Natural killer cell (primary cell): ENCODE measurements at regions of chr5 and their contacts with region 1.

Region 1: GRCh38 chr5:34695275-34696027 is 39.3 kb downstream of the RAI14 start:
- DNase-seq: peak in 1 of 2 donors; percentile 8
- ATAC-seq: peak; percentile 74 to 95 (median 84)
- H3K4me3 ChIP-seq: no peak overlapping the region
- H3K4me3 Mint-ChIP-seq: no peak overlapping the region
- H3K27ac ChIP-seq: peak overlapping the region; percentile 14
- H3K27ac Mint-ChIP-seq: peak overlapping the region; percentile 45 to 79
- H3K4me1 ChIP-seq: peaks cover 2% of the 10 kb centered on the region
- H3K4me1 Mint-ChIP-seq: peaks cover 6 to 10% of the 10 kb centered on the region in 2 donors
- H3K27me3 ChIP-seq: no peaks in the 10 kb centered on the region
- H3K27me3 Mint-ChIP-seq: no peaks in the 10 kb centered on the region
- CTCF ChIP-seq: no peak

Region 2: DNA sequence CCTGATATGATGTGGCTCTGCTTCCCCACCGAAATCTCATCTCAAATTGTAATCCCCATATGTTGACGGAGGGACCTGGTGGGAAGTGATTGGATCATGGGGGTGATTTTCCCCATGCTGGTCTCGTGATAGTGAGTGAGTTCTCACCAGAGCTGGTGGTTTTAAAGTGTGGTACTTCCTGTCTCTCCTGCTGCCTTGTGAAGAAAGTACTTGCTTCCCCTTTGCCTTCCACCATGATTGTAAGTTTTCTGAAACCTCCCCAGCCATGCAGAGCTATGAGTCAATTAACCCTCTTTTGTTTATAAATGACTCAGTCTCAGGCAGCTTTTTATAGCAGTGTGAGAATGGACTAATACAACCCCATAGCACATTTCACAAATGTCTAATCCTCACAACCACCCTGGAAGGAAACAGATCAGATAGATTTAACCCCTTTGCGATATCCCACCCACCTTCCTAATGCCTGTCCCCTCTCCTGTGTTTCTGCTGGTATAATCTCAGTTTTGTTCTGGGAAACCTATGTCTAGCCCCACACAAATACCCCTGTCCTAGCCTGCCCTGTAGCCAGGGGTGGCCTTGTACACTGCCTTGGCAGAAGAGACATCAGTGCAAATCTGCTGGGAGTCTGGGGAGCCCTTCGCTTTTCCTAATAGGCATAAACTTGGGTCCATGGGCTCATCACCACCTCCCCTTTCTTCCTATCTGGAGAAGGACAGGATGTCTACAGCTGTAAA is 196.3 kb before region 1 on chr5:
- intact Hi-C with region 1: loop called (anchors 5 kb)
- DNase-seq: peak in 1 of 2 donors; percentile 26
- ATAC-seq: peak; percentile 75 to 80 (median 77)
- H3K4me3 ChIP-seq: no peak overlapping the region
- H3K4me3 Mint-ChIP-seq: peak overlapping the region; percentile 70
- H3K27ac ChIP-seq: peak overlapping the region; percentile 52
- H3K27ac Mint-ChIP-seq: peak overlapping the region; percentile 92 to 93
- H3K4me1 ChIP-seq: peaks cover 53% of the 10 kb centered on the region
- H3K4me1 Mint-ChIP-seq: peaks cover 60 to 63% of the 10 kb centered on the region in 2 donors
- H3K27me3 ChIP-seq: no peaks in the 10 kb centered on the region
- H3K27me3 Mint-ChIP-seq: no peaks in the 10 kb centered on the region
- CTCF ChIP-seq: no peak

Region 3: DNA sequence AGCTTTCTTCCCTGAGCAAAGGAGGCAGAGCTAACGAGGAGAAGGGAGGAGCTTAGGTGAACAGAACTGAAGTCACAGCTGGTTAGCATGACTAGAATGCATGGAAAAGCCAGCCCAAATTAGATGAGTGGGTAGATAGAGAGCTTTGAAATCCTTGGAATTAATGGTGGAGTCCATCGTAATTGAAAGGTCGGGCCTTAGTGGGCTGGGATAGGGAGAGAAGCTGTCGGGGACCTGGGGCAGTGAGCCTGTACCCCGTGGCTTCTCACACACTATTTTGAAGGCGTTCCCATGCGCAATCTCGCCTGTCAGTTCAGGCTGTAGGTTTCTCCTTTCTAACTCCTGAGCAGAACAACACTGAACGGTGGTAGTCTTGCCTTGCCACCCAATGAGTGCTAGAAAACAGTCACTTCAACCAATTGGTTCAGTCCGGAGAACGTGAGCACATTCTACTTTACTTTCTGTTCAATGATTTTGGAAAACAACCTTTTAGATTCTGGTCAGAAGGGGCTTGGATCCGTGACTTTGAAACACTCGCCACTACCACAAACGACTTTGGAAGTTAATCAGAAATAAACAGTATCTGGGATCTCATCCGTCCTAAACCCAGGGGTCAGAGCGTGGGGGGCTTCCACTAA is 40.0 kb before region 1 on chr5:
- intact Hi-C with region 1: loop called (anchors 1 kb)
- DNase-seq: peak in 1 of 2 donors; percentile 57
- ATAC-seq: peak; percentile 45 to 76 (median 72)
- H3K4me3 ChIP-seq: peak overlapping the region; percentile 35
- H3K4me3 Mint-ChIP-seq: peak overlapping the region; percentile 97
- H3K27ac ChIP-seq: no peak overlapping the region
- H3K27ac Mint-ChIP-seq: peak overlapping the region; percentile 77 to 88
- H3K4me1 ChIP-seq: peaks cover 17% of the 10 kb centered on the region
- H3K4me1 Mint-ChIP-seq: peaks cover 21 to 25% of the 10 kb centered on the region in 2 donors
- H3K27me3 ChIP-seq: peaks cover 8% of the 10 kb centered on the region
- H3K27me3 Mint-ChIP-seq: peaks cover 6 to 16% of the 10 kb centered on the region in 2 donors
- CTCF ChIP-seq: no peak

Region 4: GRCh38 chr5:34709861-34710673 is 14.6 kb after region 1 on chr5:
- intact Hi-C with region 1: no loop called
- DNase-seq: no peak
- ATAC-seq: no peak
- H3K4me3 ChIP-seq: no peak overlapping the region
- H3K4me3 Mint-ChIP-seq: no peak overlapping the region
- H3K27ac ChIP-seq: no peak overlapping the region
- H3K27ac Mint-ChIP-seq: no peak overlapping the region
- H3K4me1 ChIP-seq: no peaks in the 10 kb centered on the region
- H3K4me1 Mint-ChIP-seq: no peaks in the 10 kb centered on the region
- H3K27me3 ChIP-seq: no peaks in the 10 kb centered on the region
- H3K27me3 Mint-ChIP-seq: peaks cover 7 to 10% of the 10 kb centered on the region in 2 donors
- CTCF ChIP-seq: no peak

Region 5: GRCh38 chr5:34721327-34721726 is 25.9 kb after region 1 on chr5:
- intact Hi-C with region 1: no loop called
- DNase-seq: no peak
- ATAC-seq: no peak
- H3K4me3 ChIP-seq: no peak overlapping the region
- H3K4me3 Mint-ChIP-seq: no peak overlapping the region
- H3K27ac ChIP-seq: no peak overlapping the region
- H3K27ac Mint-ChIP-seq: no peak overlapping the region
- H3K4me1 ChIP-seq: no peaks in the 10 kb centered on the region
- H3K4me1 Mint-ChIP-seq: no peaks in the 10 kb centered on the region
- H3K27me3 ChIP-seq: no peaks in the 10 kb centered on the region
- H3K27me3 Mint-ChIP-seq: peaks cover 0 to 14% of the 10 kb centered on the region in 2 donors
- CTCF ChIP-seq: no peak